ENCODE measurements at regions of chr5 and their contacts with region 1.

Region 1: DNA sequence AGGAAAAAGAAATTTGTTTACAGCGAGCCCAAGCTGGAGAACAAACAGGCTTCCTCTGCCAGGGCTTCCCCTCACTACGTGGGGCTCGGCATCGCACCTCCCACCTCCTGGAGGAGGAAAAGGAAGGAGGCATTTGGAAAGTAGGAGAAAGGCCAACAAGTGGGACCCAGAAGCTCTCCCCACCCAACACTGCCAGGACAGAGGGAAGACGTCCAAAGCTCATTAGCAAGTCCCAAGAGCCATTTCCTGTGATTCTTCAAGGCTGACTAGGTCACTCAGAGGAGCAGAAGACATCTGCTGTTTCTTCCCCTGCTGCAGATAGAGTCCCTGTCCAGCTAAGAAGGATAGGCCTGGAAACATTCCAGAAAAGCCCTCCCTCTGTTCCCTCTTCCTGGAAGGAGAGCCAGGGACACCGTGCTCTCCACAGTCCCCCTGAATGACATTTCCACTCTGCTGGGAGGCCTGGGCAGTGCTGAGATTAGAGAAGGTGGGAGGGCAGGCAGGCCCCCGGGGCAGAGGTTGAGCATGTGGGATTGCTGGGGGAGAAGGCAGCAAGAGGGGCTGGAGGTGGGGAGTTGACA is 57.0 kb upstream of the NEURL1B start:
- DNase-seq: peak; percentile 72 to 85
- ATAC-seq: peak; percentile 70 to 91 (median 84)
- H3K4me3 ChIP-seq: no peak overlapping the region
- H3K27ac ChIP-seq: peak overlapping the region; percentile 81 to 96 (median 87)
- H3K4me1 ChIP-seq: peaks cover 24 to 86% (median 59%) of the 10 kb centered on the region in 9 donors
- H3K27me3 ChIP-seq: no peaks in the 10 kb centered on the region
- CTCF ChIP-seq: no peak

Region 2: DNA sequence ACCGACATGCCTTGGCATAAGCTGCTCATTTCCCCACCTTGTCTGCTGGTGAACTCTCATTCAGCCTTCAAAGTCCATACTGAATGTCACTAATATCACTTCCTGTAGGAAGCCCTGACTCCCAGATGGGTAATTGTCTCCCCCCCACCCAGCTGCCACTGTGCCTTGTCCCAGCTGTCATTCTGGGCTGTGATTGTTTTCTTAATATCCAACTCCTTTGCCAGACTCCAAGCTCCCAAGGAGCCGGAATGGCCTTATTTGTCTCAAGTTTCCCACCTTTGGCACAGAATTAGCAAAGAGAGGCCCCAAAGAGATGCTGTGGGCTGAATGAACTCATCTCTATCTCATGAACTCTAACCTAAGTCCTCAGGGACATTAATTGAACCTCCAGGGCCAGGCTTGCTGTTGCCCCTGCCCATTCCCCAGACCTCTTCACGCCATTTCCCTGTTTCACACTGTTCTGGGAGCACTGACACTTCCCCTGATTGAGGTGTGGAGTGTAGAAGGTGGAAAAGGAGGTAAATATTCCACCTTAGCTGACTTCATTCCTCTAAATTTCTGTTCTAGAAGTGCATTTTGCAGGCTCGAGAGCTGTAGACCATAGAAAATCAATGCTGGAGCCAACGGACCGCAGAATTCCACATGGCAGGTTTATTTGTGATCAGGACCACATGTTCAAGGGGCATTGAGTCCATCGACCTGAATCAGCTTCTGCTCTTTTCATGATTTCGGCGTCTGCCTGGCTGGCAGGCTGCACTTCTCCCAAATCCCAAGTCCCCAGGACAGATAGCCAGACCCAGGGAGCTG is 124.8 kb before region 1 on chr5:
- intact Hi-C with region 1: no loop called
- DNase-seq: no peak
- ATAC-seq: no peak
- H3K4me3 ChIP-seq: no peak overlapping the region
- H3K27ac ChIP-seq: no peak overlapping the region
- H3K4me1 ChIP-seq: peaks cover 4 to 55% (median 21%) of the 10 kb centered on the region in 9 donors
- H3K27me3 ChIP-seq: peaks cover 0 to 8% (median 0%) of the 10 kb centered on the region in 7 donors
- CTCF ChIP-seq: no peak

Region 3: GRCh38 chr5:172486451-172486850 is 97.6 kb before region 1 on chr5:
- intact Hi-C with region 1: loop called in 2 of 10 experiments (anchors 5 to 10 kb)
- DNase-seq: peak; percentile 27 to 40
- ATAC-seq: peak; percentile 39 to 90 (median 66)
- H3K4me3 ChIP-seq: no peak overlapping the region
- H3K27ac ChIP-seq: peak overlapping the region in 8 of 10 donors; percentile 14 to 66 (median 51)
- H3K4me1 ChIP-seq: peaks cover 0 to 43% (median 9%) of the 10 kb centered on the region in 9 donors
- H3K27me3 ChIP-seq: no peaks in the 10 kb centered on the region
- CTCF ChIP-seq: no peak

Region 4: DNA sequence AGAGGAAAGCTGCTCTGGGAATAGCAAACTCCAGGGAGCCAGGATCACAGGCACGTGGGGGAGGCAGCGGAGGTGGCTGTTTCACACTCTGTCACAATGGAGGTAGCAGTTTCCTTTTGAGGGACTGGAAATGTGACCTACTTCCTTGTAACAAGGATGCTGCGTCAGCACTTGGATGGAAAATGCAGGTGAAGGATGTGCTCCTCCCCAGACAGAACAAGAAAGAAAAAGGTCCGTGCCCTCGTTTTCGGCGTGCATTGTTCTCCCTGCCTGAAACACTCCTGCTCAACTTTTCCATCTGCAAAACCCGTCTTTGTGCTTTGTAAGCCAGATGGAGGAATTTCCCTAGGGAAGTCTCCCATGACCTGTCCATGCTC is 74.6 kb before region 1 on chr5:
- intact Hi-C with region 1: loop called in 5 of 10 experiments (anchors 2 to 5 kb)
- DNase-seq: peak; percentile 31 to 81
- ATAC-seq: peak; percentile 38 to 84 (median 75)
- H3K4me3 ChIP-seq: no peak overlapping the region
- H3K27ac ChIP-seq: peak overlapping the region; percentile 53 to 92 (median 82)
- H3K4me1 ChIP-seq: peaks cover 2 to 44% (median 23%) of the 10 kb centered on the region in 9 donors
- H3K27me3 ChIP-seq: no peaks in the 10 kb centered on the region
- CTCF ChIP-seq: no peak

Region 5: DNA sequence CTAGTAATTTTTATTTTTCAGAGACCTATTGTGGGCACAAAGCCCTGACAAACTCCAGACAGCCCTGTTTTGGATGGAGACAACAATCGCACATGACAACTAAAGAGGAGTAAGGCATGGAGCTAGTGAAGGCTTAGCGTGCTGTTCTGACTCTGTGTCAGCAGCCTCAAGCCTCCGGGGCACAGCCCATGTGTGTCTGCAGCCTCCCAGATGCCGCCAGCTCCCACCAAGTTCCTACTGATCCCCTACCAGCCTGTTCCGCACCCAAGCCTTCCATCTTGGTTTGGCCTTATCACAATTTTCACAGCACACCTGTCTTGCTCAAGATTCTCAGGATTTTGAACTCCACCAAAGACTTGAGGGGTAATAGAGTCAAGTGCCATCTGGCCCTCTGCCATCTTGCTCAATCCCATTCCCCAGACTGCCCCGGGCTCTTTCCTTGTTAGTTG is 59.4 kb before region 1 on chr5:
- intact Hi-C with region 1: no loop called
- DNase-seq: no peak
- ATAC-seq: no peak
- H3K4me3 ChIP-seq: no peak overlapping the region
- H3K27ac ChIP-seq: no peak overlapping the region
- H3K4me1 ChIP-seq: peaks cover 0 to 28% (median 9%) of the 10 kb centered on the region in 9 donors
- H3K27me3 ChIP-seq: no peaks in the 10 kb centered on the region
- CTCF ChIP-seq: no peak

Region 6: DNA sequence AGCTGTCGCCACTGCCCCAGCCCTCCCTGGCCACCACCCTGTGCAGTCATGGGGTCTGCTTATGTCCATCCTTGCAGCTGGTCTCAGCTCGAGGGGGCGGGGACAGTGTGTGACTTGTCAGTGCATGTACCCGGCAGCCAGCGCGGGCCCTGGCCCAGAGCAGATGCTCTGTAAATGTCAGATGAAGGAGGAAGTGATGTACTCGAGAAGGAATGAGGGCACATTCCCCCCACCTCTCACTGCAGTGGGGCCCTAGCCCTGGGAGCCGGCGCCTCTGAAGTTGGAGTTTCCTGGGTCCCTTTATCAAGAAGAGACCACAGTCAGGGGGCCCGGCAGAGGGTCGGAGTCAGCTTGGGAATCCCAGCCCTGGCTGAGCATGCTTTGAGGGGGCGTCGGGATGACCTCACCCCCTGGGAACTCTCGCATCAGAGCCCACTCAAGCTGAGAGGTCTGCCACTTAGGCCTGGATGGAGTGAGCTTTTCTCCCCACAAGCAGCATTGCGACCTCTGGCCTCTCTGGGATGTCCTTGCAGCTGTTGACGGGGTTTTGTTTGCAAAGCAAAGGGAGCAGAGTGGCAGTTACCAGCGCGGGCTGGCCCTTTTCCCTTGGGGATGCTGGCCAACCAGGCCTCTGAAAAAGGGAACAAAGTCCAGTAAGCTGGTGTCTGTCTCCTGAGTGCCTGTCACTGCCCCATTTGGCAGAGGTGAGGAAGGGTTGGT is 76.0 kb after region 1 on chr5:
- intact Hi-C with region 1: no loop called
- DNase-seq: peak; percentile 90 to 93
- ATAC-seq: peak; percentile 88 to 93 (median 92)
- H3K4me3 ChIP-seq: peak overlapping the region in 2 of 10 donors; percentile 13 to 21
- H3K27ac ChIP-seq: peak overlapping the region; percentile 76 to 99 (median 91)
- H3K4me1 ChIP-seq: peaks cover 40 to 100% (median 77%) of the 10 kb centered on the region in 9 donors
- H3K27me3 ChIP-seq: no peaks in the 10 kb centered on the region
- CTCF ChIP-seq: peak in 4 of 9 donors; percentile 14 to 26 (median 21)

Region 7: GRCh38 chr5:172688349-172689217 is 104.6 kb after region 1 on chr5:
- intact Hi-C with region 1: loop called in 3 of 10 experiments (anchors 5 to 10 kb)
- DNase-seq: peak in 1 of 2 donors; percentile 53
- ATAC-seq: peak; percentile 30 to 58 (median 46)
- H3K4me3 ChIP-seq: no peak overlapping the region
- H3K27ac ChIP-seq: peak overlapping the region; percentile 8 to 92 (median 59)
- H3K4me1 ChIP-seq: peaks cover 23 to 89% (median 74%) of the 10 kb centered on the region in 9 donors
- H3K27me3 ChIP-seq: no peaks in the 10 kb centered on the region
- CTCF ChIP-seq: no peak

Measured in heart right ventricle (tissue), 16 donors.